MCF 10A (cell line): ENCODE measurements at regions of chr6 and their contacts with region 1.

Region 1: DNA sequence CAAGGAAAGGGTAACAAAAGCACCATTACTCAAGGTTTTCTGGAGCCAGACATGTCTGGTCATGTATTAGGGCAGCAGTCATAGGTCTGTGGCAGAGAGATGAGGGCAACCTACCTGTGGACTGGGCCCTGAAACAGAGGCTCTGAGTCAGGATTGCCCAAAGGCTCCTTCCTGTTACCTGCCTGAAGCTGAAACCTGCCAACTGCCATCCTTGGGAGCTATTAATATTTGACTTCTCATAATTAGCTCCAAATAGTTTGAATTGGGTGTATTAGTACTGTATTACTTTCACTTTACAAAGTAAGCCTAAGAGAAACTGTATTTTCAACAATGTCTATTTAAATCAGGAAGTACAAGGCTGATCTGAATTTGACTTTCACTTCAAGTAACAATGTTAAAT is 72.0 kb upstream of the TBX18 start:
- DNase-seq: peak; percentile 92
- H3K4me3 Mint-ChIP-seq: no peak overlapping the region
- H3K27ac Mint-ChIP-seq: peak overlapping the region; percentile 85
- H3K4me1 Mint-ChIP-seq: peaks cover 19% of the 10 kb centered on the region
- H3K27me3 Mint-ChIP-seq: no peaks in the 10 kb centered on the region
- CTCF ChIP-seq: no peak

Region 2: GRCh38 chr6:84615113-84615850 is 221.1 kb before region 1 on chr6:
- CTCF ChIA-PET with region 1: no interaction called
- POLR2A ChIA-PET with region 1: no interaction called
- intact Hi-C with region 1: no loop called
- DNase-seq: no peak
- H3K4me3 Mint-ChIP-seq: no peak overlapping the region
- H3K27ac Mint-ChIP-seq: no peak overlapping the region
- H3K4me1 Mint-ChIP-seq: peaks cover 9% of the 10 kb centered on the region
- H3K27me3 Mint-ChIP-seq: no peaks in the 10 kb centered on the region
- CTCF ChIP-seq: no peak

Region 3: GRCh38 chr6:84825461-84825860 is 10.9 kb before region 1 on chr6:
- CTCF ChIA-PET with region 1: no interaction called
- POLR2A ChIA-PET with region 1: interaction called, 16 read pairs
- intact Hi-C with region 1: no loop called
- DNase-seq: peak; percentile 90
- H3K4me3 Mint-ChIP-seq: no peak overlapping the region
- H3K27ac Mint-ChIP-seq: peak overlapping the region; percentile 7
- H3K4me1 Mint-ChIP-seq: peaks cover 8% of the 10 kb centered on the region
- H3K27me3 Mint-ChIP-seq: no peaks in the 10 kb centered on the region
- CTCF ChIP-seq: no peak

Region 4: DNA sequence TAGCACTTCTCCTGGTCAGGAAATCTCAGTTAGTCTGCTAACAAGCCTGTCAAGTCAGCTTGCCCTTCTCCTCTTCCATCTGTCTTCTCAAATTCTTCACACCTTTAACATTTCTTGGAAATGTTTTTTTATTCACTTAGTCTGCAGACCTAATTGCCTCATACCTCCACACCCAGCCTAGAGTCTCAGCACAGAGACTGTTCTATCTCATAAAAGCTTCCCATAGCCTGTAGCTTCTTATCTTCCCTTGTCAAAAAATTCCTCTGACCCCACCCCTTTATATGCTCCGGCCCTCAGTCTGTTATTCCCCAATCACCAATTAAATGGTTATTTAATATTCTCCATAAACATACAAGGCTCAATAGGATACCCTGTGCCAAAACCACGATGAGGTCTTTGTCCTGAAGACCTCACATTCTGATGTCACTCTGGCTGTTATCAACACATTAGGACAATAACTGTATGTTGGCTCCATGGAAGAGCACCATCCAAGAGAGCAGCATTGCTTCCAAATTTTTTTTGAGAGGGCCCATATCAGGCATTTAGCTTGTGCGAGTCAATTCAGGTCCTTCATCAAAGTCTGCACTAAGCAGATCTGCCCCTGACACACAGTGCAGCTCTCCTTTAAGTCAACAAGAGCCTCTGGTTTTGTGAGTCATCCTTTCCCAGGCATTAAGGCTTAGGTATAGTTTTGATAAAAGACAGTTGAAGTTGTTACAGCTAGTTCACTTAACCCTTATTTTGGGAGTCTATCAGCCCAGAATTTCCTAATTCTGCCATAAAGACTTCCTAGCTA is 11.2 kb after region 1 on chr6:
- CTCF ChIA-PET with region 1: no interaction called
- POLR2A ChIA-PET with region 1: interaction called, 14 read pairs
- intact Hi-C with region 1: no loop called
- DNase-seq: peak; percentile 71
- H3K4me3 Mint-ChIP-seq: no peak overlapping the region
- H3K27ac Mint-ChIP-seq: peak overlapping the region; percentile 11
- H3K4me1 Mint-ChIP-seq: peaks cover 14% of the 10 kb centered on the region
- H3K27me3 Mint-ChIP-seq: no peaks in the 10 kb centered on the region
- CTCF ChIP-seq: no peak

Region 5: GRCh38 chr6:85186546-85187175 is 350.3 kb after region 1 on chr6:
- CTCF ChIA-PET with region 1: no interaction called
- POLR2A ChIA-PET with region 1: no interaction called
- intact Hi-C with region 1: no loop called
- DNase-seq: peak; percentile 45
- H3K4me3 Mint-ChIP-seq: no peak overlapping the region
- H3K27ac Mint-ChIP-seq: peak overlapping the region; percentile 81
- H3K4me1 Mint-ChIP-seq: peaks cover 26% of the 10 kb centered on the region
- H3K27me3 Mint-ChIP-seq: no peaks in the 10 kb centered on the region
- CTCF ChIP-seq: no peak